ENCODE measurements at regions of chr17 and their contacts with region 1.

Region 1: DNA sequence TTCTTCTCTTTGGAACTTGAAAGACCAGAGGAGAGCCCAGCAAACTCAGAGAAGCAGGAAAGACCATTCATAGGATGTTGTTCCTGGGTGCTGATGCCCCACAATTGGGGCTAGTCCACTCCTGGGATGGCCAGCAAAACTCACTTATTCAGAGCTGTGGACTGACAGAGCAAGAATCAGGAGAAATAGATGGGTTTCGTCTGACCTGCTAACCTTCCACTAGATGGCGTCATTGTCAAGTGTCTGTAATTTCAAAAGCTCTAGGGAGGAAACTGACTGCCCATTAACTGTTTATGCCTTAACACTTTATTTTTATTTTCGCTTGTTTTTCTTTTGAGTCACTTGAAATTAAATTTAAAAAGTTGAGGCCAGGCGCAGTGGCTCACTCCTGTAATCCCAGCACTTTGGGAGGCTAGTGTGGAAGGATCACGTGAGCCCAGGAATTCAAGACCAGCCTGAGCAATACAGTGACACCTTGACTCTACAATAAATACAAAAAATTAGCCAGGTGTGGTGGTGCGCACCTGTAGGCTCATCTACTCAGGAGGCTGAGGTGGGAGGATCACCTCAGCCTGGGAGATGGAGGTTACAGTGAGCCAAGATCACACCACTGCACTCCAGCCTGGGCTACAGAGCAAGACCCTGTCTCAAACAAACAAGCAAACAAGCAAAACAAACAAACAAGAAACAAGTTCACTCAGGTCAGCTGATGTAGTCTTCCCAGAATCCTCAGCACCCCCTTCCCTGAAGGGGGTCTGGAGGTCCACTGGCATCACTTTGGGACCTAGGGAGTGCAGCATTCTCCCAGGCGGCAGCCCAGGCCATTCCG is 28.6 kb upstream of the MILR1 start:
- DNase-seq: no peak
- ATAC-seq: peak; percentile 79
- H3K4me3 Mint-ChIP-seq: no peak overlapping the region
- H3K27ac Mint-ChIP-seq: no peak overlapping the region
- H3K4me1 Mint-ChIP-seq: no peaks in the 10 kb centered on the region
- H3K27me3 Mint-ChIP-seq: no peaks in the 10 kb centered on the region
- CTCF ChIP-seq: peak; percentile 87

Region 2: GRCh38 chr17:64145757-64146417 is 274.5 kb before region 1 on chr17:
- CTCF ChIA-PET with region 1: interaction called, 14 read pairs
- POLR2A ChIA-PET with region 1: no interaction called
- intact Hi-C with region 1: no loop called
- DNase-seq: peak; percentile 98
- ATAC-seq: peak; percentile 96
- H3K4me3 Mint-ChIP-seq: no peak overlapping the region
- H3K27ac Mint-ChIP-seq: no peak overlapping the region
- H3K4me1 Mint-ChIP-seq: peaks cover 18% of the 10 kb centered on the region
- H3K27me3 Mint-ChIP-seq: no peaks in the 10 kb centered on the region
- CTCF ChIP-seq: no peak

Region 3: GRCh38 chr17:64250233-64250835 is 170.0 kb before region 1 on chr17:
- CTCF ChIA-PET with region 1: no interaction called
- POLR2A ChIA-PET with region 1: no interaction called
- intact Hi-C with region 1: no loop called
- DNase-seq: no peak
- ATAC-seq: no peak
- H3K4me3 Mint-ChIP-seq: no peak overlapping the region
- H3K27ac Mint-ChIP-seq: no peak overlapping the region
- H3K4me1 Mint-ChIP-seq: peaks cover 4% of the 10 kb centered on the region
- H3K27me3 Mint-ChIP-seq: no peaks in the 10 kb centered on the region
- CTCF ChIP-seq: no peak

Region 4: DNA sequence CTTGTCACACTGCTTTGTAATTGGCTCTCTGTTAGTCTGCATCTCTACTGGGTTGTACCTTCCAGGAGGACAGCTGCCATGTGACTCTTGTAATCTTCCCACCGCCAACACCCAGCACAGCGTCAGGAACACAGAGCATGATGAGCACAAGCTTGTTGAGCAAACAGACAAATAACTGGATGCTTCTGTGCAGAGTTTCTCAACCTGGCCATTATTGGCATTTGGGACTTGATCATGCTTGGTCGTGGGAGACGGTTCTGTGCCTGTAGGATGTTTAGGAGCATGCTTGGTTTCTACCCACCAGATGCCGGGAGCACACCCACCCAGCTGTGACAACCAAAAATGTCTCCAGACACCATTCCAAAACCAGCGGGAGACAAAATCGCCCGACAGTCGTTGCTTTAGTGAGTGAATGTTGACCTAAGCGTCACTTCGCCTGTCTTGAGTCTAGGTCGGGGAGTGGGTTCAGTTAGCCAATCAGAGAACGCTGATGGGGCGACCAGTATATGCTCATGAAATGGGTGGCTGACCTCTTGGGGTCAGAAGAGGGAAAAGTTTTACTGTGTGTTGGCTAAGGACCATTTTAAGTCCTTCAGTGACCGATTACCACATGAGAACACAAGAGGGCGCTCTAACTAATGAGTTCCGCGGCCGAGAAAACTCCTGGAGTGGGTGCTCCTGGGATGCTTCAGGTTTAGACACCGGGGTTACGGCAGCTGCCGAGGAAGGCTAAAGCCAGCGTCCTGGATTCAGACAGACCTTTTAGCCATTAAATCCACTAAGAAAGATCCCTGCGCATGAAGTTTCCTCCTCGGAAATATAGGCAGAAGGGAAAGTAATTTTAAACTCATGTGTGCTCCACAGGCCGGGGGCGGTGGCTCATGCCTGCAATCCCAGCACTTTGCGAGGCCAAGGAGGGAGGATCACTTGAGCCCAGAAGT is 99.5 kb before region 1 on chr17:
- CTCF ChIA-PET with region 1: interaction called, 251 read pairs
- POLR2A ChIA-PET with region 1: no interaction called
- intact Hi-C with region 1: loop called (anchors 1 kb)
- DNase-seq: peak; percentile 68
- ATAC-seq: peak; percentile 47
- H3K4me3 Mint-ChIP-seq: no peak overlapping the region
- H3K27ac Mint-ChIP-seq: peak overlapping the region; percentile 43
- H3K4me1 Mint-ChIP-seq: peaks cover 40% of the 10 kb centered on the region
- H3K27me3 Mint-ChIP-seq: no peaks in the 10 kb centered on the region
- CTCF ChIP-seq: peak; percentile 94

Region 5: GRCh38 chr17:64399071-64399766 is 21.1 kb before region 1 on chr17:
- CTCF ChIA-PET with region 1: interaction called, 20 read pairs
- POLR2A ChIA-PET with region 1: no interaction called
- intact Hi-C with region 1: no loop called
- DNase-seq: peak; percentile 55
- ATAC-seq: peak; percentile 25
- H3K4me3 Mint-ChIP-seq: peak overlapping the region; percentile 13
- H3K27ac Mint-ChIP-seq: peak overlapping the region; percentile 74
- H3K4me1 Mint-ChIP-seq: peaks cover 54% of the 10 kb centered on the region
- H3K27me3 Mint-ChIP-seq: no peaks in the 10 kb centered on the region
- CTCF ChIP-seq: no peak

Region 6: GRCh38 chr17:64448665-64449512 is 28.5 kb after region 1 on chr17 and contains the start of gene MILR1:
- CTCF ChIA-PET with region 1: interaction called, 22 read pairs
- POLR2A ChIA-PET with region 1: no interaction called
- intact Hi-C with region 1: no loop called
- DNase-seq: no peak
- ATAC-seq: no peak
- H3K4me3 Mint-ChIP-seq: no peak within 1 kb of the TSS
- H3K27ac Mint-ChIP-seq: no peak within 1 kb of the TSS
- H3K4me1 Mint-ChIP-seq: peaks cover 6% of the 10 kb centered on the region
- H3K27me3 Mint-ChIP-seq: no peaks in the 10 kb centered on the region
- CTCF ChIP-seq: no peak
- total RNA-seq, gene MILR1: 1.3 to 2.3 TPM

Region 7: DNA sequence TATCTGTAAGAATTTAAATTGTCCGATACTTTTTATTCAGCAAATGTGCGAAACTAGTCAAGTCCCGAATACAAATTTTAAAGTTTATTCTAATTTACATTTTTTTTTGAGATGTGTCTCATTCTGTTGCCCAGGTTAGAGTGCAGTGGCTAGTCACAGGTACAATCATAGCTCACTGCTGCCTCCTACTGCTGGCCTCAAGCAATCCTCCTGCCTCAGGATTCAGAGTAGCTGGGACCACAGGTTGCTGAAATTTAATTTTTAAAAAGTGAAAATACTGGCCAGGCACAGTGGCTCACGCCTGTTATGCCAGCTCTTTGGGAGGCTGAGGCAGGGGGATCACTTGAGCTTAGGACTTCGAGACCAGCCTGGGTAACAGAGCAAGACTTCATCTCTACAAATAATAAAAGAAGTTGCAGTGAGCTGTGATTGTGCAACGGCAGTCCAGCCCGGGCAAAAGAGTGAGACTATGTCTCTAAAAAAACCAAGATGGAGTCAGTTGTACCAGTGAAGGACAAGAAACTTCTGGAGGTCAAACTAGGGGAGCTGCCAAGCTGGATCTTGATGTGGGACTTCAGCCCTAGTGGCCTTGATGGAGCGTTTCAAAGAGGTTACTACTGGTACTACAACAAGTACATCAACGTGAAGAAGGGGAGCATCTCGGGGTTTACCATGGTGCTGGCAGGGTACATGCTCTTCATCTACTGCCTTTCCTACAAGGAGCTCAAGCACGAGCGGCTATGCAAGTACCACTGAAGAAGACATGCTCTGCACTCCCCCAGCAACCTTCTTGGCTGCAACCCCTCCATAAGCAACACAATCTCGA is 70.9 kb after region 1 on chr17:
- CTCF ChIA-PET with region 1: interaction called, 178 read pairs
- POLR2A ChIA-PET with region 1: interaction called, 11 read pairs
- intact Hi-C with region 1: loop called (anchors 5 kb)
- DNase-seq: peak; percentile 72
- ATAC-seq: peak; percentile 82
- H3K4me3 Mint-ChIP-seq: no peak overlapping the region
- H3K27ac Mint-ChIP-seq: no peak overlapping the region
- H3K4me1 Mint-ChIP-seq: peaks cover 25% of the 10 kb centered on the region
- H3K27me3 Mint-ChIP-seq: no peaks in the 10 kb centered on the region
- CTCF ChIP-seq: peak; percentile 74

Region 8: DNA sequence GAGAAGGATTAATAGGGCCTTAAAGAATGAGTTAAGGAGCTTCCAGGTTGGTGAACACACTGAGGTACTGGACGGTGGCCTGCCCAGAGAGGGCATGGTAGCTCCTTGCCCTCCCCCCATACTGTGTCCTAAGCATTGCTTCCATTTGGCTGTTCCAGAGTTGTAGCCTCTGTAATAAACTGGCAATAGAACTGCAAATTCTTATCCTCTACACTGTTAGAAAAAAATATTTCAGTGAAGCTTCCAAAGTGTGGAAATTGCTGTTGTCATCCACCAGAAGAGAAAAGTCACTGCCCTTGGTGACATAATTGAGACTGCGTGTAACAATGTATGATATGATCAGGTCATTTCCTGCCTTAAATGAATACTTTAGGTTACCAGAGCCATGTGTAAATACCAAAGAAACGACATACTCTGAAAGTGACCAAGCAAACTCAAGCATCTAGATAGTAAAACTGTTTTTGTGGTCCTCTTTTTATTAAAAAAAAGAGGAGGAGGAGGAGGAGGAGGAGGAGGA is 152.3 kb after region 1 on chr17:
- CTCF ChIA-PET with region 1: no interaction called
- POLR2A ChIA-PET with region 1: no interaction called
- intact Hi-C with region 1: no loop called
- DNase-seq: peak; percentile 14
- ATAC-seq: peak; percentile 92
- H3K4me3 Mint-ChIP-seq: no peak overlapping the region
- H3K27ac Mint-ChIP-seq: peak overlapping the region; percentile 81
- H3K4me1 Mint-ChIP-seq: peaks cover 11% of the 10 kb centered on the region
- H3K27me3 Mint-ChIP-seq: no peaks in the 10 kb centered on the region
- CTCF ChIP-seq: no peak

Region 9: GRCh38 chr17:64648234-64648633 is 227.9 kb after region 1 on chr17:
- CTCF ChIA-PET with region 1: interaction called, 30 read pairs
- POLR2A ChIA-PET with region 1: no interaction called
- intact Hi-C with region 1: loop called (anchors 5 kb)
- DNase-seq: no peak
- ATAC-seq: no peak
- H3K4me3 Mint-ChIP-seq: no peak overlapping the region
- H3K27ac Mint-ChIP-seq: peak overlapping the region; percentile 75
- H3K4me1 Mint-ChIP-seq: peaks cover 42% of the 10 kb centered on the region
- H3K27me3 Mint-ChIP-seq: no peaks in the 10 kb centered on the region
- CTCF ChIP-seq: no peak

Measured in activated CD8-positive, alpha-beta T cell treated with anti-CD3 and anti-CD28 coated beads for 36 hours (primary cell).